A549 (cell line): ENCODE measurements at regions of chrX and their contacts with region 1.

Region 1: DNA sequence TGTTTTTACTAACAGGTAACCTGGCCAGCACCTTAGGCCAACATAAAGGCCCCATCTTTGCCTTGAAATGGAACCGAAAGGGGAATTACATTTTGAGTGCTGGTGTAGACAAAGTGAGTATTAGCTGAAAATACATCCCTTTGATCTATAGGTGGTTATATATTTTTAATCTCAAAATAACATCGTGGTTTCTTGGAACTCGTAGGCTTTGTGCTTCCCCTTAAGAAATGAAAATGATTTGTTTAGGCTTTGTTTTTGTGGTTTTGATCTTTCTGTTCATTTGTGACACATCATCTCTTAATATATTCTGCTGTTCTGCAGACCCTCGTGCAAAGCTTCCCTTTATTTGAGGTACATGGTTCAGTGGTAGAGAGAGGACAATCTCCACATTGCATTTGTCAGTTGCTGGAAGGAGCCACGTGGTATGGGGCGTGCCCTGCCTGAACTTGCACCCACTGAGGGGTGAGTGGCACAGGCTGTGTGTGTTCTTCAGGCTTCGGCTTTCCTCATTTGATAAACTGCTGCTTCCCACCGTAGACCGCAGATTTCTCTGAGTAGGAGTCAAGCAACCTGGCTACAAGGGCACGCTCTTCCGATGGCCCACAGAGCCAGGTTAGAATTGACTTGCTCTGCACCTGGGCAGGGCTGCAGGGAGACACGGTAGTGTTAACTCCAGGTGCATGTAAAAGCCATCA is 72.2 kb downstream of the GPR143 start:
- DNase-seq: no peak
- ATAC-seq: no peak
- H3K4me3 ChIP-seq: no peak overlapping the region
- H3K27ac ChIP-seq: no peak overlapping the region
- H3K4me1 ChIP-seq: no peaks in the 10 kb centered on the region
- CTCF ChIP-seq: no peak
- EP300 ChIP-seq: no peak
- POLR2A ChIP-seq: no peak
- RAD21 ChIP-seq: no peak

Region 2: GRCh38 chrX:9708904-9709553 is 15.6 kb after region 1 on chrX:
- CTCF ChIA-PET with region 1: interaction called, 10 read pairs
- POLR2A ChIA-PET with region 1: no interaction called
- DNase-seq: peak; percentile 64
- ATAC-seq: peak; percentile 89 to 97
- H3K4me3 ChIP-seq: no peak overlapping the region
- H3K27ac ChIP-seq: 0 out of 6 replicates have a peak overlapping the region, but pooled peaks of 1 of the 2 experiments have one; percentile 53
- H3K4me1 ChIP-seq: no peaks in the 10 kb centered on the region
- CTCF ChIP-seq: peak; percentile 80
- EP300 ChIP-seq: no peak
- POLR2A ChIP-seq: no peak
- RAD21 ChIP-seq: peak; percentile 88 to 93

Region 3: DNA sequence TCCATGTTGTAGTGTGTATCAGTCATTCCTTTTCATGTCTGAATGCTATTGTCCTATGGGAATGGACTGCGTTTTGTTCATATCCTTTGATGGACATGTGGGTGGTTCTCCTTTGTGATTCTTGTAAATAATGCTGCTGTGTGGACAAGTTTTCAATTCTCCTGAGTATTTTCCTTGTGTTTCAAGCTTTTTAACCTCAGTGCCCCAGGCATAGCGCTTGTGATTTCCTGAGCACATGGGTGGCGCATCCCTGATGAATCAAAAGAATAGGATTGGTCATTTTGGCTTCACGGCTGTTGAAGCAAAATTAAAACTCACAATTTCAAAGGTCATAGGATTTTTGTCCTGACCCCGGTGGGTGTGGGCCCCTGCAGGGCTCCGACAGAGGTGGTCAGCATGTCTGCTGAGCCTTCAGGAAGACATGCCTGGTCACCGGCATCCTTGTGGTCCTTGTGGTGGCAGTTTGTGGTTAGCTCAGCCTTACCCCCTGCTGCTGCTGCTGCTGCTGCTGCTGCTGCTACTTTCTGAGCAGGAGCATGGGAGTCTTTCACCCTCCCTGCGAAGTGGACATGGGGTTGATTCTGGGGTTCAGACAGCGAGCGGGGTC is 122.7 kb after region 1 on chrX:
- CTCF ChIA-PET with region 1: no interaction called
- POLR2A ChIA-PET with region 1: no interaction called
- DNase-seq: no peak
- ATAC-seq: no peak
- H3K4me3 ChIP-seq: no peak overlapping the region
- H3K27ac ChIP-seq: no peak overlapping the region
- H3K4me1 ChIP-seq: no peaks in the 10 kb centered on the region
- CTCF ChIP-seq: no peak
- EP300 ChIP-seq: no peak
- POLR2A ChIP-seq: no peak
- RAD21 ChIP-seq: no peak